PC-3 (cell line): ENCODE measurements at regions of chr6 and their contacts with region 1.

Region 1: GRCh38 chr6:10404107-10404798 is 10.6 kb downstream of the TFAP2A start:
- DNase-seq: peak; percentile 98
- ATAC-seq: peak; percentile 78
- H3K4me3 ChIP-seq: peak overlapping the region; percentile 91
- H3K27ac ChIP-seq: peak overlapping the region; percentile 100
- H3K4me1 ChIP-seq: peaks cover 81% of the 10 kb centered on the region
- H3K27me3 ChIP-seq: no peaks in the 10 kb centered on the region
- CTCF ChIP-seq: peak; percentile 42

Region 2: GRCh38 chr6:9140172-9140571 is 1264.1 kb before region 1 on chr6:
- CTCF ChIA-PET with region 1: no interaction called
- POLR2A ChIA-PET with region 1: no interaction called
- intact Hi-C with region 1: loop called (anchors 10 kb)
- DNase-seq: peak; percentile 82
- ATAC-seq: peak; percentile 72
- H3K4me3 ChIP-seq: peak overlapping the region; percentile 53; the same call in 1 of the 2 replicates
- H3K27ac ChIP-seq: peak overlapping the region; percentile 91
- H3K4me1 ChIP-seq: peaks cover 31% of the 10 kb centered on the region
- H3K27me3 ChIP-seq: no peaks in the 10 kb centered on the region
- CTCF ChIP-seq: no peak

Region 3: GRCh38 chr6:10033223-10033829 is 370.9 kb before region 1 on chr6:
- CTCF ChIA-PET with region 1: no interaction called
- POLR2A ChIA-PET with region 1: no interaction called
- intact Hi-C with region 1: no loop called
- DNase-seq: peak; percentile 53
- ATAC-seq: no peak
- H3K4me3 ChIP-seq: peak overlapping the region; percentile 3; the same call in 1 of the 2 replicates
- H3K27ac ChIP-seq: no peak overlapping the region
- H3K4me1 ChIP-seq: peaks cover 16% of the 10 kb centered on the region
- H3K27me3 ChIP-seq: peaks cover 14% of the 10 kb centered on the region
- CTCF ChIP-seq: no peak

Region 4: DNA sequence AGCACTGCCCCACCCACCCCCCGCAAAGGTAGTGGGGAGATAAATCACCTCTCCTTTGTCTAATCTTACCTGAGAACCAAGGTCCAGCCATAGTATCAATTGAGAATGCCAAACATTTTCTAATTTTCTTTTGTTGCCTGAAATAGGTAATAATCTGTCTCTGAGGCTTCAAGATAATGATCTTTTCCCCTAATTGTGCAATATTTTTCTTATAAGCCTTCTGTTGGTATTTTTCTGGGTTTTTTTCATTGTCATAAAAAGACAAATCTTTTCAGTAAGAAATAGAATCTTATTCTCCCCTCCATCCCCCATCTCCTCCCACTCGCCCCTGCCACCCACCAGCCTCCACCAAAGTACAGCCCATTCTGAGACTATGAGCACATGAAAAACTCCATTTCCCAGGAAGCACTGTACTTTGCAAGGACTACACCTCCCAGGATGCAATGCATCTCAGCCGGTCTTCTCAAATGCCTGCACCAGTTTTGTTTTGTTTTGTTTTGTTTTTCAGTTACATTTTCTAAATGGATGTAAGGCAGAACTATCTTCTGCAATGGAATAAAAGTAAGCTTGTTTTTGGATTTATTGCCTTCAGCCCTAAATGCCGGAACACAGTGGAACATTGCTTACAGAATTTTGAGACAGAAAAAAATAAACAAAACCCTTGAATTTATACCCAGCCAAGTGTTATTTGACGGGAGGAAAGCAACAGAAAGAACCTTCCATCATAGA is 257.4 kb before region 1 on chr6:
- CTCF ChIA-PET with region 1: no interaction called
- POLR2A ChIA-PET with region 1: no interaction called
- intact Hi-C with region 1: loop called (anchors 10 kb)
- DNase-seq: peak; percentile 49
- ATAC-seq: peak; percentile 56
- H3K4me3 ChIP-seq: peak overlapping the region; percentile 55
- H3K27ac ChIP-seq: no peak overlapping the region
- H3K4me1 ChIP-seq: peaks cover 3% of the 10 kb centered on the region; the same call in 1 of the 2 replicates
- H3K27me3 ChIP-seq: peaks cover 18% of the 10 kb centered on the region; the same call in 1 of the 2 replicates
- CTCF ChIP-seq: no peak

Region 5: DNA sequence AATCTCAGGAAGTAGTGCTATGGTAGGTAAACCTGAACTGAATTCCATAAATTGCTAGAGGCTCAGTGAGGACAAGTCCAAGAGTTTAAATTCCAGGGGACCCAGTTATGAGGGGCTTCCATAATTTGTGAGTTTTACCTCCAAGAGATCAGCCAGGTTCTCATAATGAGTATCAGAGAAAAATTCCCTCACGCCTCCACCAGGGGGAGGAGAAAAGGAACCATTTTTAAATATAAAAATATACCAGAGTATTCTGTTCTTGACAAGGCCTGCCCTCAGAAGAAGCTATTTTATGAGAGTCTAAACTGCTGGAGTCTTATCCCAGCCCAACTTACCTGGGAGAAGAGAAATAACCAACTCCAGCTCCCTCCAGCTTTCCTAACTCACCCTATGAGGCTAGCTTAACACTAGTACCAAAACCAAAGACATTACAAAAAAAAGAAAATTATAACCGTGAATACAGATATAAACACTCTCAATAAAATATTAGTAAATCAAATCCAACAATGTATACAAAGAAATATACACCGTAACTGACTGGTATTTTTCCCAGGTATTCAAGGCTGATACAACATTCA is 148.1 kb before region 1 on chr6:
- CTCF ChIA-PET with region 1: no interaction called
- POLR2A ChIA-PET with region 1: interaction called, 4 read pairs
- intact Hi-C with region 1: loop called (anchors 1 kb)
- DNase-seq: peak; percentile 63
- ATAC-seq: peak; percentile 64
- H3K4me3 ChIP-seq: no peak overlapping the region
- H3K27ac ChIP-seq: no peak overlapping the region
- H3K4me1 ChIP-seq: no peaks in the 10 kb centered on the region
- H3K27me3 ChIP-seq: no peaks in the 10 kb centered on the region
- CTCF ChIP-seq: peak; percentile 71